Activated CD4-positive, alpha-beta memory T cell treated with anti-CD3 and anti-CD28 coated beads for 36 hours (primary cell): ENCODE measurements at regions of chr3 and their contacts with region 1.

Region 1: DNA sequence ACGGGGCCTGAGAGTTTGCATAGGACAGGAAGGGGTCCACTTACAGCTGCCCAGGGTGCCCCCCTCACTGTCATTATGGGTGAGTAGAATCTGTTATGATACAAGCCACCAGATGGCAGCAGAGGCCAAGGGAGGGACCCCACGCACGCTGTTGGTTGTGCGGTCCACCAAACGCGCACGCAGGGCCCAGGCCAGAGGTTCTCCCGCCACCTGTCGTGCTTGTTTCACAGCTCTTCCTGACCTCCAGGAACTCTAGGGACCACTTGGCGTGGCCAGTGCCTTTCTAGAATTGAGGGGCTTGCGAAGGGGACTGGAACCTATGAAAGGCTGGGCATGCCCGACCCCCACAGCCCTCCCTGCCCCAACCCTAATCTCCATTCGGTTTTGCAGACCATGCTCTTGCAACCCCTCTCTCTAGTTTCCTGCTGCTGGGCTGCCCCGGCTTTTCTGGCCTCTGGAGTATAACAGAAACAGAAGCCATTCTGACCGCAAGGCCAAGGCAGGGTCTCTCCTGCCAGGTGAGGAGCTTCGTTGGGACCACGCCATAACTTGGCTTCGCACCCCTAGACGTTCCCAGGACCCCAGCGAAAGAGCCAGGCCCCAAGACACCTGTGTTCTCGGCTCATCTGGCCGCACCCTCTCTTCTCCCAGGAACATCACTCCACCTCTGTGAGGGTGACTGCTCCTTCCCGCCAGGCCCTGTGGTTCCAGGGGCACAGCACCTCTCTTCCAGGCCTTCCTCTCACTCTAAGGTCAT is 46.0 kb downstream of the ALDH1L1 start:
- DNase-seq: peak; percentile 58
- H3K4me3 Mint-ChIP-seq: no peak overlapping the region
- H3K27ac Mint-ChIP-seq: no peak overlapping the region
- H3K4me1 Mint-ChIP-seq: no peaks in the 10 kb centered on the region
- H3K27me3 Mint-ChIP-seq: peaks cover 12% of the 10 kb centered on the region

Region 2: GRCh38 chr3:126197854-126198584 is 63.6 kb after region 1 on chr3:
- CTCF ChIA-PET with region 1: interaction called, 20 read pairs
- POLR2A ChIA-PET with region 1: no interaction called
- intact Hi-C with region 1: loop called (anchors 2 kb)
- DNase-seq: peak; percentile 66
- H3K4me3 Mint-ChIP-seq: no peak overlapping the region
- H3K27ac Mint-ChIP-seq: no peak overlapping the region
- H3K4me1 Mint-ChIP-seq: no peaks in the 10 kb centered on the region
- H3K27me3 Mint-ChIP-seq: peaks cover 12% of the 10 kb centered on the region

Region 3: DNA sequence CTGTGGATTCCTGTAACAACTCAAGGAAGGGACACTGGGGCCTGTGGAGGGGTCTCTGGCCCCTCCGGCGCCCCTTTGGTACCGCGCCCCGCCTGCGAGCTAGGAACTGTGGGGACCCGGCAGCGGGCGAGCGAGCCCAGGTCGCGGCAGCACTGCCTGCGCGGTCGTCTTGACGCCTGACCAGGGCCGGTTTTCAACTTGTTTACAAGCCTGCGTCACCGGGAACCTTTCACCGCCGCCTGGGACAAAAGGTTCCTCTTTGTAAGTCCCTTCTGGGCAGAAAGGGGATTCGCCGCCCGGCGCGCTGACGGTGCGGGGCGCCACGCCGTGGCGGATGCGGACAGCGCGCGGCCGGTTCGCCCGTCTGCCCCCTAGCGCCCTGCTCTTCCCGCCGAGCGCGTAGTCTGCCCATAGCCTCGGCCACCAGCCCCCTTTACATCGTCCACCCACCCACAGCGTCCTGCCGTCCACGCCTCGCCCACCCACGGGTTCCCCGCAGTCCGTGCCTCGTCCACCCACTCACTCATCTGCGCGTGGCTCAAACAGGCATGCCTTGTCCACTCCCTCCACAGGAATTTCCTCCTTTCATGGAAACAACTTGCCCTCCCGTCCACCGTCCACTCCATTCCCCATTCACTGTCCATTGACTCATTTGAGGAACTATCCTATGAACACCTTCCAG is 254.9 kb after region 1 on chr3:
- CTCF ChIA-PET with region 1: interaction called, 6 read pairs
- POLR2A ChIA-PET with region 1: no interaction called
- intact Hi-C with region 1: loop called (anchors 1 kb)
- DNase-seq: peak; percentile 58
- H3K4me3 Mint-ChIP-seq: no peak overlapping the region
- H3K27ac Mint-ChIP-seq: no peak overlapping the region
- H3K4me1 Mint-ChIP-seq: peaks cover 3% of the 10 kb centered on the region
- H3K27me3 Mint-ChIP-seq: peaks cover 52% of the 10 kb centered on the region